ENCODE measurements at regions of chr2 and their contacts with region 1.

Region 1: DNA sequence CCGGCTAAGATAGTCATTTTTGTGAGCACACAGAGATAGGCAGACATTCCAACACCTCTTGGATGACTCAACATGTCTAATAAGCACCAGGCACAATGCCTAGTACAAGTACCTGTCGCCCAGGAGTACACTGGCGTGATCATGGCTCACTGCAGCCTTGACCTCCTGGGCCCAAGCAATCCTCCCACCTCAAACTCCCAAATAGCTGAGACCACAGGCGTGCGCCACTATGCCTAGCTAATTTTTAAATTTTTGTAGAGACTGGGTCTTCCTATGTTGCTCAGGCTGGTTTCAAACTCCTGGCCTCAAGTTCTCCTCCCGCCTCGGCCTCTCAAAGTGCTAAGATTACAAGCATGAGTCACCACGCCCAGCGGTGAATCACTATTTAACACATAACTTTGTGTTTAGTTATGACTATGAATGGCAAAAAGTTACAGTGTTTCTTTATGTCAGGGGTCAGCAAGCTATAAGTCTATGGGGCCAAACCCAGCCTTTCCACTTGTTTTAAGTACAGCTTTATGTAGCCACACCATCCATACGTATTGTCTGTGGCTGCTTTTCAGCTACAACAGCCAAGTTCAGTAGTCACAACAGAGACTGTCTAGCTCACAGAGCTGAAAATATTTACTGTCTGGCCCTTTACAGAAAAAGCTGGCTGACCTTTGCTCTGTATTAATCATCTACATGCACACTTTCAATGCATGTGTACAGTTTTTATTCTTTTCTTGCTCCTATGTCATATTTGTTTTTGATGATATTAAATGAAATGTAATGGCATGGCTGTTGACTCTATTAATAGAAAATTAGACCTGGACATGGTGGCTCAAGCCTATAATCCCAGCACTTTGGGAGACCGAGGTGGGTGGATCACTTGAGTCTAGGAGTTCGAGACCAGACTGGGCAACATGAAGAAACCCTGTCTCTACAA is 18.7 kb downstream of the ORC2 start:
- DNase-seq: no peak
- ATAC-seq: no peak
- H3K4me3 ChIP-seq: no peak overlapping the region
- H3K27ac ChIP-seq: no peak overlapping the region
- H3K4me1 ChIP-seq: no peaks in the 10 kb centered on the region
- H3K27me3 ChIP-seq: no peaks in the 10 kb centered on the region
- CTCF ChIP-seq: no peak

Region 2: DNA sequence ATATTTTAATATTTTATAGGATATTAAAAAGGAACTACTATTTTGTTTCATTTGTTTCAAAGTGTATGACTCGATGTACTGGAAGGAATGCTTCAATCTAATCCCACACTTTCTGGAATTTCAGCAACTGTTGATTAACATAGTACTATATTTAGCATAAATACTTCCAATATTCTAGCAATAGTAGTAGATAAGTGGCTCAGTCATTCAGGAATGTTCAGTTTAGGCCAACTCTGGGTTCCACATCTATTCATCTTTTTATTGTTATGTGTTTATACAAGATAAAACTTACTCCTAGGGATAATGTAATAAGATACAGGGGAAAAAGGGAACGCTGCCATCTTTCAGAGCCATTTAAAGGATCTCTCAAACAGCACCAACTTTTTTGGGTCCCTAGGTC is 41.1 kb after region 1 on chr2:
- intact Hi-C with region 1: loop called in 1 of 2 experiments (anchors 5 kb)
- DNase-seq: no peak
- ATAC-seq: no peak
- H3K4me3 ChIP-seq: no peak overlapping the region
- H3K27ac ChIP-seq: no peak overlapping the region
- H3K4me1 ChIP-seq: no peaks in the 10 kb centered on the region
- H3K27me3 ChIP-seq: no peaks in the 10 kb centered on the region
- CTCF ChIP-seq: no peak

Region 3: GRCh38 chr2:201118121-201118960 is 173.6 kb after region 1 on chr2:
- intact Hi-C with region 1: no loop called
- DNase-seq: peak; percentile 90 to 96
- ATAC-seq: peak; percentile 61 to 72 (median 68)
- H3K4me3 ChIP-seq: peak overlapping the region; percentile 100
- H3K27ac ChIP-seq: peak overlapping the region; percentile 100
- H3K4me1 ChIP-seq: peaks cover 52% of the 10 kb centered on the region
- H3K27me3 ChIP-seq: no peaks in the 10 kb centered on the region
- CTCF ChIP-seq: peak; percentile 51

Measured in psoas muscle (tissue), 8 donors.